Psoas muscle (tissue), 8 donors: ENCODE measurements at regions of chr7 and their contacts with region 1.

Region 1: DNA sequence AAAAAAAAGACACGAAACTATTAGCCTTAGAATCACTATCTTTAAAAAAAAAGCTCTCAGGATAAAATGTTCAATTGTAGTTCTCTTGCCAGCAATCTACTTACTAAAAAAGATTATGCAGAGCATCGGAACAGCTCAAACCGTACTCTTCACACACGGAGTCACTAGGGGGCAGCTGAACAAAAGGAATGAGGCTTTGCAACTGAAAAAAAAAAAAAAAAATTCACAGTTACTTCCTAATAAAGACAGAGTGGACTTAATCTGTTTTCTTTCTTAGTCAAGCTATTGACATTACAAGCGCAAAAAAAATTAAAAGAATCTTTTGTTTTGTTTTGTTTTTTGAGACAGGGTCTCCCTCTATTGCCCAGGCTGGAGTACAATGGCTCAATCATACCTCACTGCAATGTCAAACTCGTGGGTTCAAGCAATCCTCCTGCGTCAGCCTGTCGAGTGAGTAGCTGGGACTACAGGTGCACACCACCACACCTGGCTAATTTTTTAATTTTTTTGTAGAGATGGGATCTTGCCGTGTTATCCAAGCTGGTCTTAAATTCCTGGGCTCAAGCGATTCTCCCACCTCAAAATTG is 11.5 kb downstream of the PMS2 start:
- DNase-seq: no peak
- ATAC-seq: peak in 3 of 4 donors; percentile 73 to 91 (median 74)
- H3K4me3 ChIP-seq: no peak overlapping the region
- H3K27ac ChIP-seq: peak overlapping the region; percentile 30
- H3K4me1 ChIP-seq: peaks cover 5% of the 10 kb centered on the region
- H3K27me3 ChIP-seq: no peaks in the 10 kb centered on the region
- CTCF ChIP-seq: peak; percentile 66

Region 2: GRCh38 chr7:6049780-6050179 is 52.5 kb after region 1 on chr7:
- intact Hi-C with region 1: no loop called
- DNase-seq: no peak
- ATAC-seq: no peak
- H3K4me3 ChIP-seq: no peak overlapping the region
- H3K27ac ChIP-seq: no peak overlapping the region
- H3K4me1 ChIP-seq: no peaks in the 10 kb centered on the region
- H3K27me3 ChIP-seq: no peaks in the 10 kb centered on the region
- CTCF ChIP-seq: no peak

Region 3: GRCh38 chr7:6323967-6324701 is 326.8 kb after region 1 on chr7:
- intact Hi-C with region 1: loop called in 1 of 2 experiments (anchors 10 kb)
- DNase-seq: peak in 1 of 2 donors; percentile 23
- ATAC-seq: no peak
- H3K4me3 ChIP-seq: no peak overlapping the region
- H3K27ac ChIP-seq: no peak overlapping the region
- H3K4me1 ChIP-seq: no peaks in the 10 kb centered on the region
- H3K27me3 ChIP-seq: no peaks in the 10 kb centered on the region
- CTCF ChIP-seq: no peak